ENCODE measurements at regions of chr12 and their contacts with region 1.

Region 1: GRCh38 chr12:100733817-100734593 is 60.6 kb upstream of the ANO4 start:
- DNase-seq: no peak
- H3K4me3 ChIP-seq: no peak overlapping the region
- H3K27ac ChIP-seq: no peak overlapping the region
- H3K4me1 ChIP-seq: no peaks in the 10 kb centered on the region
- H3K27me3 ChIP-seq: no peaks in the 10 kb centered on the region
- CTCF ChIP-seq: peak; percentile 62

Region 2: DNA sequence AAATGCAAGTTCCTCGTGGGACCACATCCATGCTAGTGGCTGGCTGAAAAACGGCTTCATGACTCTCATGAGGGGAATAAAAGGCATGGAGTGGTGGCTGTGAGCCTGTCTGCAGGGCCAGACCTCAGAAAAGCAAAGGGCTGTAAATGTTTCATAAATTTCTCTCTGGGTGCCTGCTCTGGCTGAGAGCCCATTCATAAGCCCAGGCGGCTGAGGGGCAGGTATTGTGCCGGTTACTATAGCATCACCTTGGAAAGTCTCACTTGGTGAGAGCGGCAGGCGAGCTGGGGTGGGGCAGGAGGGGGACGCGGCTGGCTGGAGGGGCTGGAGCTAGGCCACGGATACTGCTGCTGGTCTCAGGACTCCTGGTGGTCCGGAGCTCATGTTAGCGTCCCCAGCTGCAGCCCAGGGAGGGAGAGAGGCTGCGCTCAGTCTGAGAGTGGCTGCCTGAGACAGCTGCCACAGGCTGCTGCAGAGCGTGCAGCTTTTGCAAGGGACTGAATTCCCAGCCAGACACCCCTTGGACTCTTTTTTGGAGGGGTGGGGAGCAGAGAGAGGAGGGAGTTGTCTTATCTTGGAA is 377.3 kb before region 1 on chr12 and contains the start of gene SLC17A8:
- CTCF ChIA-PET with region 1: no interaction called
- POLR2A ChIA-PET with region 1: no interaction called
- intact Hi-C with region 1: no loop called
- DNase-seq: no peak
- H3K4me3 ChIP-seq: no peak within 1 kb of the TSS
- H3K27ac ChIP-seq: no peak within 1 kb of the TSS
- H3K4me1 ChIP-seq: no peaks in the 10 kb centered on the region
- H3K27me3 ChIP-seq: peaks cover 57% of the 10 kb centered on the region
- CTCF ChIP-seq: no peak
- total RNA-seq, gene SLC17A8: not detected in 2 replicates

Region 3: DNA sequence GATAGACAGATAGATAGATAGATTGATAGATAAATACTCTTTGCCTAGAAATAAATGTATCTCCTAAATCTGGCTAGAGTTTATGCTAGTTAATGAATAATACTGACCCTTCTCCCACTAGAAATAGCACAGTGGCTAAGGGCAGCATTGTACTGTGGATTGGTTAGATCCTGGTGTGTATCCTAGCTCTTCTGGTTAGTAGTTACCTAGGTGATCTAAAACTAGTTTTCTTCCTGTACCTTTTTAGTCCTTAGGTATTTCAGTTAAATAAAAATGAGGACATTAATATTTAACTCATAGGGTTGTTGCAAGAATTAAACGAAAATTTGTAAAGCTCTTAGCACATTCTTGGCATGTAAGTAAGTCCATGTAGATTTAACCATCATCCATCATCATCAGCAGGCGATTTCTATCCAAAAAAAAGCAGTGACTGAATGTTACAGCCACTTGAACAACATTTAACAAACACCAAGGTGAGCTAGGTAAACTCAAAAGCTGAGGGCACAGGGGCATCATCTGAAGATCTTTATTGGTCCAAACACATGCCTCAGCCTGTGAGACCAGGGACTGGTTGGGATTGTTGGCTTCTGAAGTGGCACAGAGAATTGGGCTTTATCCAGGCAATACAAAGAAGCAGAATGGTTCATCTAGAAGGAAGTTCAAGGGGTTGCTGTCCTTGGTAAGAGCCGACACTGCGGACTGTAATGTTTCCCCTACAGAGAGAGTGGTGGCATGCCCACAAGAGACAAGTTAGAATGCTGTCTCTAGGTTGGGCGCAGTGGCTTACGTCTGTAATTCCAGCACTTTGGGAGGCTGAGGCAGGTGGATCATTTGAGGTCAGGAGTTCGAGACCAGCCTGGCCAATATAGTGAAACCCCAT is 59.8 kb before region 1 on chr12:
- CTCF ChIA-PET with region 1: interaction called, 11 read pairs
- POLR2A ChIA-PET with region 1: no interaction called
- intact Hi-C with region 1: no loop called
- DNase-seq: no peak
- H3K4me3 ChIP-seq: no peak overlapping the region
- H3K27ac ChIP-seq: no peak overlapping the region
- H3K4me1 ChIP-seq: no peaks in the 10 kb centered on the region
- H3K27me3 ChIP-seq: peaks cover 77% of the 10 kb centered on the region
- CTCF ChIP-seq: no peak

Region 4: DNA sequence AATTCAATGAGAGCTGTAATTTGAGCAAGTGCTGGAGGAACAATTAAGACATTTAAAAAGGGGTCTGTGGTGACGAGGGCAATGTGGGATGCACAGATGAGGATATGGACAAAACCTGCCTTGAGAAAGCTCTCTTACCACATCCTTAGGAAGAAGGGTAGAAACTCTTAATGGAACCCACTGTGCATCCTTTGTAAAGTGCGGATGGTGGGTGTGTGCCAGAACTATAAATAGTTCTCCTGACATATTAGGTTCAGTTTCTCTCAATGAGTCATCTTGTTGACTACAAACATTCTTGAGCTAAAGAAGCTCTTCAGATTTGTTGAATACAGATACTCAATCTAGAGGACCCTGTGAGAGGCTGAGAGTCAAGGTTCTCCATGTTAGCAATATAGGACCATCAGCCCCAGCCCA is 45.5 kb before region 1 on chr12:
- CTCF ChIA-PET with region 1: no interaction called
- POLR2A ChIA-PET with region 1: no interaction called
- intact Hi-C with region 1: no loop called
- DNase-seq: no peak
- H3K4me3 ChIP-seq: no peak overlapping the region
- H3K27ac ChIP-seq: no peak overlapping the region
- H3K4me1 ChIP-seq: no peaks in the 10 kb centered on the region
- H3K27me3 ChIP-seq: 0 out of 2 replicates have a peak, but pooled peaks cover 8% of the 10 kb centered on the region
- CTCF ChIP-seq: no peak

Region 5: DNA sequence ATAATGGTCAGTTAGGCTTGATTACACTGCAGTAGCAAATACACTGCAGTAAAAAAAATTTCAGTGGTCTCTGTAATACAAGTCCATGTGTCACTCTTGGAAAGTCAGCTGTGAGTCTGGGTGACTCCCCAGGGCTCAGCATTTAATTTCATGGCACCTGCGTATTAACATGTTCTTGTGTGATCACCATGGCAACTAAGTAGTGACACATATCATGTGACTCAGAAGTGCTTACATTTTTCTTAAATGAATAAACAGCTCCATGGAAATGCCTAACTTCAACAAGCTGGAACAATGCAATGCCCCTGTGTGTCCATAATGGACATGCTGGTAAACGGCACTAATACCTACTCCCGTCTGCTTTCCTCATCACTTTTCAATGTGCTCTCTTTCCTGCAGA is 28.0 kb before region 1 on chr12:
- CTCF ChIA-PET with region 1: no interaction called
- POLR2A ChIA-PET with region 1: no interaction called
- intact Hi-C with region 1: no loop called
- DNase-seq: peak in 1 of 2 experiments; percentile 53
- H3K4me3 ChIP-seq: no peak overlapping the region
- H3K27ac ChIP-seq: no peak overlapping the region
- H3K4me1 ChIP-seq: no peaks in the 10 kb centered on the region
- H3K27me3 ChIP-seq: 0 out of 2 replicates have a peak, but pooled peaks cover 3% of the 10 kb centered on the region
- CTCF ChIP-seq: no peak

Region 6: DNA sequence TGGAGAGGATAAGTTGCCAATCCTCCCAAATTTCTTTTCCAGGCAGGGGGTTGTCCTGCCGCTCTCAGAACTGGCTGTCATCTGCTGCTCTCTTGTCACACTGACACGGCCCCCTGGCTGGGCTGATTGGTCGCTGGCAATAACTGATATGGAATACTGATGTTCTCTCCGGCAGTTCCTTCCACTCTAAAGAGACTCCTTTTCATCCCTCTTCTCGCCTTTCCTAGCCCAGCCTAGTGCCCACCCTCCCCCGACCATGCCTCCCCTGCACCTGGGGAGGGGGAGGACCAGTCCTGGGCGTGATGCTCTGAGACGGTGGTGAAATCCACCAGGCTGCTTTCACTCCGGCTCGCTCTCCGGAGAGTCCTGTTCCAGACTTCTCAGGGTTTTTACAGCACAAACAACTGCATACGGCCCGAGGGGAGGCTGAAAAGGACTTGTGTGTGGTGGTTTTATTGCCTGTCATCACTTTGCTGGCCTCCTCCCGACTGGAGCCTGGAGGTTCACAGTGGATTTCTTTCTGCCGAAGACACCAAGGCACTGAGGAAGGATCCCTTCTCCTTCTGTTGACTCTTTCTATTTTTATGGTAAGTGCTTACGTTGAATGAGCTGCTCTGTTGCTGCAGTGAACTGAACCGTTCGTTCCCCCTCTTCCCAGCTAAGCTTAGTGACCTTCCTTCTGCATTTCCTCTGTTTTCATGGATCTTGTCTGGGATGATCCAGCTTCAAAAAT is 60.6 kb after region 1 on chr12 and contains the start of gene ANO4:
- CTCF ChIA-PET with region 1: no interaction called
- POLR2A ChIA-PET with region 1: no interaction called
- intact Hi-C with region 1: no loop called
- DNase-seq: no peak
- H3K4me3 ChIP-seq: no peak within 1 kb of the TSS
- H3K27ac ChIP-seq: no peak within 1 kb of the TSS
- H3K4me1 ChIP-seq: no peaks in the 10 kb centered on the region
- H3K27me3 ChIP-seq: peaks cover 58% of the 10 kb centered on the region
- CTCF ChIP-seq: no peak
- total RNA-seq, gene ANO4: not detected in 2 replicates

Measured in PC-9 (cell line).